Colonic mucosa (tissue), 4 donors: ENCODE measurements at regions of chr11 and their contacts with region 1.

Region 1: DNA sequence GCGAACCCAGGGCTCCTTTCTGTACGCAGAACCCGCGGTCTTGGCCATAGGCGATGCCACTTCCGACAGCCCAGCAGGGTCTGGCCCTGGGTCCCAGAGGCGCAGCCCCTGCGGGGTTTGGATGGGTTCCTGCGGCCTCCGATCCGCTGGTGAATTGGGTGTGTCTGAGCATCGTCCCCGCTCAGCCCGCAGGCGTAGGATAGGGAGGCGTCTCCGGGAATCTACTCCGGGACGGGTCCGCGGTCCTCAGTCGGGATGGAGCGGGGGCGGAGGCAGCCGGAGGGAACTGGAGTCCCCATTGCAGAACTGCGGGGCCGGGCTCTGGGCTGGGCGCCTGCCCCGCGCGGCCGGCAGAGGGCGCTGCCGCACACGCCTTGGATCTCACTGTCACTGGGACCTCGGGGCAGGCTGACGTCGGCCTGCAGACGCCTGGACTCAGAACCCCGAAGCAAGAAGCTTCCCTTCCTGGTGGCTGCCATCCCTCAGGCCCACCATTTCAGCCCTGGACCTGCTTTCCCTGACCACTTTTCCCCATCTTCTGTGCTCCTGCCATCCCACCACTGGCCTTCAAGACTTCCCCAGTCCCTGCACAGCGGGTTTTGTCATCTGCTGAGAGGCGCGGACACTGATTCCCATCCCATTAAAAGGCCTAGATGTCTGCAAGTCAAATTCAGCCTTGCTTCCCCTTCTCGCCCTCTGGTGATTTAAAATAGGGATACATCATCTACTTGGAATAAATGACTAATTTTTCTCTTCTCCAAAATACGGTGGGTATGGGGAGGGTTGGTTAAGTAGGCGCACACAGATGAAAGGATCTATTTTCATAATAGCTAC is 38.3 kb upstream of the CREB3L1 start:
- DNase-seq: peak; percentile 85
- H3K4me3 ChIP-seq: peak overlapping the region; percentile 50
- H3K27ac ChIP-seq: peak overlapping the region; percentile 61
- H3K4me1 ChIP-seq: peaks cover 16% of the 10 kb centered on the region
- H3K27me3 ChIP-seq: peaks cover 11% of the 10 kb centered on the region
- CTCF ChIP-seq: peak; percentile 99

Region 2: GRCh38 chr11:45834298-45834756 is 404.9 kb before region 1 on chr11:
- intact Hi-C with region 1: no loop called
- DNase-seq: no peak
- H3K4me3 ChIP-seq: no peak overlapping the region
- H3K27ac ChIP-seq: no peak overlapping the region
- H3K4me1 ChIP-seq: no peaks in the 10 kb centered on the region
- H3K27me3 ChIP-seq: no peaks in the 10 kb centered on the region
- CTCF ChIP-seq: no peak

Region 3: DNA sequence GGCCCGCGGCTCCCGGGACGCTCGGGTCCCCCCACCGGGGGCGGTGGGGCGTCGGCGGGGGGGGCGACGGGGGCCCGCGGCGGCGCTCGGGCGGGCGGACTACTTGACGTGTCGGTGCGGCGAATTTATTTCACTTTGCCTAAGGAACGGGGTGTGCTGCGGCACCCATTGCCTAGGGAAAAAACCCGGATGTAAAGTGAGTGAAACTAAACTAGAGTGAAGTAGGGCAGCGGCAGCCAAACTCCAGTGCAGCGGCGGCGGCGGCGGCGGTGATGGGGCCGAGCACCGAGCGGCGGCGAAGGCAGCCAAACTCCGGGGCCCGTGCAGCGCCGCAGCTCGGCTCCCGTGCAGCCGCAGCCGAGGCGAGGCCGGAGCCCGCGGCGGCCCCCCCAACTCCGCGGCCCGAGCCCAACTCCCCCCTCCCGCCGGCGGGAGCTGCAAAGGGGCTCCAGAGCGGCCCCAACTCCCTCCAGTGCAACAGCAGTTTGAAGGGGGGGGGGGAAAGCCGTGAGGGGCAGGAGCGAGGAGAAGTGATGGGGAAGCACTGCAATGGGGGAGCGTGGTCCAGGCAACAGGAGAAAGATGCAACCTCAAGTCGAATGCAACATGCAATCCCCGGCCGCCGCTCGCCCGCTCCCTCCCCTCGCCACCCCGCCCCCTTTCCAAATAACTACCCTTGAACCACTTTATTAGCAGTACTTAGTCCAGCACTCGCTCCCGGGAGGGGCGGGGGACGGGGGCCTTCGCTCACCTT is 117.3 kb before region 1 on chr11:
- intact Hi-C with region 1: loop called (anchors 10 kb)
- DNase-seq: peak; percentile 83
- H3K4me3 ChIP-seq: peak overlapping the region; percentile 58
- H3K27ac ChIP-seq: peak overlapping the region; percentile 92
- H3K4me1 ChIP-seq: no peaks in the 10 kb centered on the region
- H3K27me3 ChIP-seq: no peaks in the 10 kb centered on the region
- CTCF ChIP-seq: no peak

Region 4: GRCh38 chr11:46308631-46309419 is 69.6 kb after region 1 on chr11:
- intact Hi-C with region 1: loop called (anchors 5 kb)
- DNase-seq: peak; percentile 76
- H3K4me3 ChIP-seq: no peak overlapping the region
- H3K27ac ChIP-seq: no peak overlapping the region
- H3K4me1 ChIP-seq: no peaks in the 10 kb centered on the region
- H3K27me3 ChIP-seq: no peaks in the 10 kb centered on the region
- CTCF ChIP-seq: peak; percentile 77

Region 5: DNA sequence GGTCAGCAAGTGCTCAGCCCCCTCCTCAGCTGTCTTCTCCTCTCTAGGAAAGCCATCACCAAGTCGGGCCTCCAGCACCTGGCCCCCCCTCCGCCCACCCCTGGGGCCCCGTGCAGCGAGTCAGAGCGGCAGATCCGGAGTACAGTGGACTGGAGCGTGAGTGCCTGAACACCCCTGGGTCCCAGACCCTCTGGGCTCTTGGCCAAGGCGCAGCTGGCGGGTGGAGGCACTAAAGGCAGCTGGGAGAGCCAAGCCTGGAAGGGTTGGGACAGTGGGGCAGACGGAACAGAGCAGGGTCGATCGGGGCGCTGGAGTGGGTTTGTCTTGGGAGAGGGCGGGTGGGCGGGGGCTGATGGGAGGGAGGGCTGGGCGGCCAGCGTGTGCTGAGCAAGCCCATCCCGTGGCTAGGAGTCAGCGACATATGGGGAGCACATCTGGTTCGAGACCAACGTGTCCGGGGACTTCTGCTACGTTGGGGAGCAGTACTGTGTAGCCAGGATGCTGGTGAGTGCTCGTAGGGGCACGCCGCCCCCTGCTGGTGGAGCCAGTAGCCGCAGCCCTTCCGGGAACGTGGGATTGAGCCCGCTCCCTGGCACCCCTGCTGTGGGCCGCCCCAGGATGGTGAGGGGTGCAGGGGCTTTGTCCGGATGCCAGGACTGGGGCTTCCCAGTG is 128.2 kb after region 1 on chr11:
- intact Hi-C with region 1: loop called (anchors 5 kb)
- DNase-seq: peak; percentile 77
- H3K4me3 ChIP-seq: no peak overlapping the region
- H3K27ac ChIP-seq: no peak overlapping the region
- H3K4me1 ChIP-seq: no peaks in the 10 kb centered on the region
- H3K27me3 ChIP-seq: no peaks in the 10 kb centered on the region
- CTCF ChIP-seq: peak; percentile 81

Region 6: GRCh38 chr11:46537537-46538295 is 298.5 kb after region 1 on chr11:
- intact Hi-C with region 1: loop called (anchors 10 kb)
- DNase-seq: peak; percentile 73
- H3K4me3 ChIP-seq: no peak overlapping the region
- H3K27ac ChIP-seq: no peak overlapping the region
- H3K4me1 ChIP-seq: peaks cover 3% of the 10 kb centered on the region
- H3K27me3 ChIP-seq: no peaks in the 10 kb centered on the region
- CTCF ChIP-seq: peak; percentile 76